Activated CD4-positive, alpha-beta memory T cell treated with anti-CD3 and anti-CD28 coated beads for 36 hours (primary cell): ENCODE measurements at regions of chr1 and their contacts with region 1.

Region 1: GRCh38 chr1:224922404-224923164 is 6.9 kb upstream of the DNAH14 start:
- DNase-seq: no peak
- H3K4me3 Mint-ChIP-seq: no peak overlapping the region
- H3K27ac Mint-ChIP-seq: no peak overlapping the region
- H3K4me1 Mint-ChIP-seq: no peaks in the 10 kb centered on the region
- H3K27me3 Mint-ChIP-seq: peaks cover 9% of the 10 kb centered on the region

Region 2: DNA sequence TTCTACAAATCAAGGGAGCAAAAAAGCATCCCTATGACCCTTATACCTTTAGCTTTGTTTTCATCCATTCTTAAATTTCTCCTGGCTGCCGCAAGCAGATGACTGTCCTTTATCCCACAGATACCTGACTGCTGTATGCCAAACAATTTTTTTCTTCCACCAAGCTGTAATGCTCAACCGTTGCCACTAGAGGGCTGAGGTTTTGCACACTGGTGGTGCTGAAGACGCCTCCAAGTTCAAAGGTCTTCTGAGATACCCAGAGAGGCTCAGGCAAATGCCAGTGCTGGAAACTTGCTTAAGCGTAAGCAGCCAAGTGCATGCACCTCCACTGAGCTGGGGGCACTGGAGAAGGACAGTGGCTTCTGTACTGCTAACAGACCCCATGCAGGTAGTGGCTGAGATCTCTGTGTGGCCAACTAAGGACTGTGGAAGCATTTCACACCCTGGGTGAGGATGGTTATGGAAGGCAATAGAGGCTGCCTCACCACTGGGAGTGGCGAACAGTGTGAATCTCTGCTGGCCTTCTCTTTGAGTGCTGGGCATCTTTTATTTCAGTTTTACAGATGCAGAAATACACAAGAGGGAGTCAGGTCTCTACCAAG is 277.9 kb before region 1 on chr1:
- CTCF ChIA-PET with region 1: interaction called, 6 read pairs
- POLR2A ChIA-PET with region 1: no interaction called
- intact Hi-C with region 1: loop called (anchors 5 kb)
- DNase-seq: peak; percentile 66
- H3K4me3 Mint-ChIP-seq: no peak overlapping the region
- H3K27ac Mint-ChIP-seq: no peak overlapping the region
- H3K4me1 Mint-ChIP-seq: no peaks in the 10 kb centered on the region
- H3K27me3 Mint-ChIP-seq: no peaks in the 10 kb centered on the region

Region 3: GRCh38 chr1:224791362-224791941 is 131.1 kb before region 1 on chr1:
- CTCF ChIA-PET with region 1: no interaction called
- POLR2A ChIA-PET with region 1: no interaction called
- intact Hi-C with region 1: no loop called
- DNase-seq: no peak
- H3K4me3 Mint-ChIP-seq: no peak overlapping the region
- H3K27ac Mint-ChIP-seq: no peak overlapping the region
- H3K4me1 Mint-ChIP-seq: no peaks in the 10 kb centered on the region
- H3K27me3 Mint-ChIP-seq: no peaks in the 10 kb centered on the region